Mammary epithelial cell (primary cell): ENCODE measurements at regions of chr10 and their contacts with region 1.

Region 1: GRCh38 chr10:79347226-79347893 is at the start of gene PPIF:
- DNase-seq: peak; percentile 88
- H3K4me3 ChIP-seq: peak within 1 kb of the TSS; percentile 57 to 89 (median 78)
- H3K27ac ChIP-seq: peak within 1 kb of the TSS; percentile 87
- H3K4me1 ChIP-seq: peaks cover 25% of the 10 kb centered on the region
- H3K27me3 ChIP-seq: no peaks in the 10 kb centered on the region
- CTCF ChIP-seq: peak; percentile 77 to 95
- total RNA-seq, gene PPIF: 32.0 to 78.1 TPM

Region 2: GRCh38 chr10:79239275-79239779 is 108.0 kb before region 1 on chr10:
- CTCF ChIA-PET with region 1: no interaction called
- dilution Hi-C with region 1: loop called (anchors 10 kb)
- in situ Hi-C with region 1: no loop called
- intact Hi-C with region 1: loop called (anchors 5 kb)
- DNase-seq: peak; percentile 73
- H3K4me3 ChIP-seq: no peak overlapping the region
- H3K27ac ChIP-seq: peak overlapping the region; percentile 37
- H3K4me1 ChIP-seq: peaks cover 80% of the 10 kb centered on the region
- H3K27me3 ChIP-seq: no peaks in the 10 kb centered on the region
- CTCF ChIP-seq: no peak

Region 3: DNA sequence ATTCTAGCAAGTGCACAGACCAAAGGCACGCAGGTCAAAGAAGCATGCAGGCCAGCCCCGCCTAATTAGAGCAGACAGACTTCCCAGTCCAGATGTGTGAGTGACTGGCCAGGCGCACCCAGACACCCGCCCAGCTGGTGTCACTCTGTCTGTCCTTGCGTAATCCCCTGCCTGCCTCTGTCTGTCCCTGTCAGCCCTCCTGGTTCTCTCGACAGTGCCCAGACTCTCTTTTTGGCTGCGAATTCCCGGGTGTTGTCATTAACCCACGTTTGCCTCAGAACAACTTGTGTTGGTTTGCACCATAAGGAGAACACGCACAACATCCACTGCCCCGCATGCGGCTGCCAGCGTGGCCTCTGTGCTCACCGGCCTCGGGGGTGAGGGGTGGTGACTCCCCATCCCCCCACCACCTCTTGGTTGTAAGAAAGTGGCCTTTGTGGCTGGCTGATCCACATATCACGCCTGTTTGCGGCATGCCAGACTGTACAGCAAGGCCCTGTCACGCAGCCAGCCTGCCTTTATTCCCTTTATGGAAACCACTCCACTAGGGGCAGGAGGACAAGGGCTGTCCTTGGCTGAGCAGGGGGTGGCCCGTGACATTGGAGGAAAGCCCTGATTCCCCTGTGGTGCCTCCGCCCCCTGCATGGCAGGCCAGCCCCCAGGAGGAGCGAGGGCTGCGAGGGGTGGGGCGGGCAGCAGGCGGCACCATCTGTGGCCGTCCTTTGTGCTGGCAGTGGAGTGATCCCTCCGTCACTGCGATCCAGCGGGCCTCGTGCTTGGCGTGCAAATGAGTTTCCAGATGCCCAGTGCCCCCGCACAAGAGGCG is 72.9 kb before region 1 on chr10:
- CTCF ChIA-PET with region 1: no interaction called
- dilution Hi-C with region 1: no loop called
- in situ Hi-C with region 1: no loop called
- intact Hi-C with region 1: no loop called
- DNase-seq: peak; percentile 30
- H3K4me3 ChIP-seq: no peak overlapping the region
- H3K27ac ChIP-seq: no peak overlapping the region
- H3K4me1 ChIP-seq: peaks cover 29% of the 10 kb centered on the region
- H3K27me3 ChIP-seq: no peaks in the 10 kb centered on the region
- CTCF ChIP-seq: no peak

Region 4: DNA sequence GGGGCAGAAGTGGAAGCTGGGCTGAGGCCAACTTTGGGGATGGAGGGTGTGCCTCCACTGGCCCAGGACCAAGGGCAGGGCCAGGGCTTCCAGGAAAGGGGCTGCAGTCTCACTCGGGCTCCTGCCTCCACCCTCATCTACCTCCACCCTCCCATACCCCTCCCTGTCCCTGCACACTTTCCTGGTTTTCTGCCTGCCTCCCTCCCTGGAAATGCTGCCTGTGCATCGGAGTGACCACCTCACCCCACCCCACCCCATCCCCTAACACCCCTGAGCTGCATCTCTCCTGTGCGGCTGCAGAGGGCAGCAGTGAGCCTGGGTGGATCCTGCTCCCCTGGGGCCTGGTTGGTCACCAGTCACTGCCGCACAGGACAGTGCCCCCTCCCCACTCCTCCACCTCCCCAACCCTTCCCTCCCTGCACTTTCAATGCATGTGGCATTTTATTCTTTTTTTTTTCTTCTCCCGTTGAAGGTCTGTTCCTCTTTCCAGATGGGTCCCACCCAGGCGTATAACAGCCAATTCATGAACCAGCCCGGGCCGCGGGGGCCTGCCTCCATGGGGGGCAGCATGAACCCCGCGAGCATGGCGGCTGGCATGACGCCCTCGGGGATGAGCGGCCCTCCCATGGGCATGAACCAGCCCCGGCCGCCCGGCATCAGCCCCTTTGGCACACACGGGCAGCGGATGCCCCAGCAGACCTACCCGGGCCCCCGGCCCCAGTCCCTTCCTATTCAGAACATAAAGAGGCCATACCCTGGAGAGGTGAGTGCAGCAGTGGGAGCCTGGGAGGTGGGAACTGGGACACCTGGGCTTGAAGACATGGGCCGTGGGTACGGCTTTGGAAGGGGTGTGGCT is 54.2 kb before region 1 on chr10:
- CTCF ChIA-PET with region 1: no interaction called
- dilution Hi-C with region 1: no loop called
- in situ Hi-C with region 1: no loop called
- intact Hi-C with region 1: loop called (anchors 1 kb)
- DNase-seq: no peak
- H3K4me3 ChIP-seq: no peak overlapping the region
- H3K27ac ChIP-seq: no peak overlapping the region
- H3K4me1 ChIP-seq: peaks cover 22% of the 10 kb centered on the region
- H3K27me3 ChIP-seq: no peaks in the 10 kb centered on the region
- CTCF ChIP-seq: peak; percentile 24 to 69

Region 5: DNA sequence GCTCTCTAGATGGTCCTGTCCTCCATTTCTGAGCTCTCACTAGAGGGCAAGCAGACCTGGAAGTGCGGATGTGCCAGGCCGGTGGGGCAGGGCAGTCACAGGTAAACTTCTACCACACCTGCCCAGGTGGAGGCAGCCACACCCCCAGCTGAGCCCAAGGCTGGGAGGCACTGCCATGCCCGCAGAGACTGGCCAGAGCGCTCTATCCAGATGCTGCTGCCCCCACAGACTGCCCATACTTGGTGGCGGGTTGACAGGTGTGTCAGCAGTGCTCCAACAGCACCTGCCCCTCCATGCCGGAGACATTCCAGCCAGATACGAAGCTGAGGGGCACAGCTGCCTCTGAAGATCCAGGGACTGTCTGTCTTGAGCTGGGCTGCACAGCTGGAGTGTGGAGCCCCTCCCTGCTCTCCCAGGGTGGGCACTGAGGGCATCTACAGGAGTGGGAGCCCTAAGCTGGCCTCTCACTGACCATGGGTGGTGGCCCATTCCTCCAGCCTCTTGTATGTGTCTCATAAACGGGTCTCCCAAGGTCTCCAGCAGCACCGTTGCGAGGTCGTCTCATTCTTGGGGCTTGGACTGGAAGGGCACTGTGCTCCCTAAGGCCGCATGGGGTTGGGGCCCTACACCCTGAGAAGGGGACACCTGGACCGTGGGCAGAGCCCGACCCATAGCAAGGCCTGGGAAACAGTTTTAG is 38.2 kb before region 1 on chr10:
- CTCF ChIA-PET with region 1: no interaction called
- dilution Hi-C with region 1: loop called (anchors 5 kb)
- in situ Hi-C with region 1: no loop called
- intact Hi-C with region 1: no loop called
- DNase-seq: no peak
- H3K4me3 ChIP-seq: no peak overlapping the region
- H3K27ac ChIP-seq: no peak overlapping the region
- H3K4me1 ChIP-seq: peaks cover 7% of the 10 kb centered on the region
- H3K27me3 ChIP-seq: no peaks in the 10 kb centered on the region
- CTCF ChIP-seq: no peak

Region 6: GRCh38 chr10:79316671-79317431 is 30.5 kb before region 1 on chr10:
- CTCF ChIA-PET with region 1: no interaction called
- dilution Hi-C with region 1: no loop called
- in situ Hi-C with region 1: no loop called
- intact Hi-C with region 1: loop called (anchors 1 kb)
- DNase-seq: no peak
- H3K4me3 ChIP-seq: no peak overlapping the region
- H3K27ac ChIP-seq: peak overlapping the region; percentile 42
- H3K4me1 ChIP-seq: peaks cover 40% of the 10 kb centered on the region
- H3K27me3 ChIP-seq: no peaks in the 10 kb centered on the region
- CTCF ChIP-seq: no peak